ENCODE measurements at regions of chr5 and their contacts with region 1.

Region 1: DNA sequence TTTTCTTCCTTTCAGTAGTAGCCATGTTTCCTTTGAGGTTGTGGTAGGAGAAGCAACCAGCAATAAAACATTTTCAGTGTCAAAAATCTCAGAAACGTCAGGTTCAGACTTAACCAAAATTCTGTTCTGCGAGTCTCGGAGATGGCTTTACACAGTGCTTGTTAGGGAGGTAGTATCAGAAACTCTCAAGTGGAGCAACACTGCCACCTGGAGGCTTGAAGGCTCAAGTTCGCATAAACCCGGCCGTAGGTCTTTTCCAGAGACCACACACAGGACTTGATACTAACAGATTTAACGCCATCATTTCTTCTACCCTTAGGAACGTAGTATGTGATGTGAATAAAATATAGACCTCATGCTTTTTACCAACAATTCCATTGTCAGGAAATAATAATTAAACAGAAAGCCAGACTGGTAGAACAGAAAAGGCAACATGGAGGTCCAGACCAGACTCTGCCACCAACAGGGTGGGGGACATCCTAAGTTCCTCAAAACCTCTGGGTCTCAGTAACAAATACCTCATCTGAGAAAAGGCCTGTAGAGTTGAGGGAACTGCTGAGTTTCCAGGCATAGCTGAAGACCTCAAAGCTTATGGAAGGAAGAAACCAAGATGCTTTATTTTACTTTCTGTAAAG is 8.5 kb downstream of the PTGER4 start:
- DNase-seq: peak; percentile 86
- H3K4me3 ChIP-seq: no peak overlapping the region
- CTCF ChIP-seq: peak; percentile 76

Region 2: DNA sequence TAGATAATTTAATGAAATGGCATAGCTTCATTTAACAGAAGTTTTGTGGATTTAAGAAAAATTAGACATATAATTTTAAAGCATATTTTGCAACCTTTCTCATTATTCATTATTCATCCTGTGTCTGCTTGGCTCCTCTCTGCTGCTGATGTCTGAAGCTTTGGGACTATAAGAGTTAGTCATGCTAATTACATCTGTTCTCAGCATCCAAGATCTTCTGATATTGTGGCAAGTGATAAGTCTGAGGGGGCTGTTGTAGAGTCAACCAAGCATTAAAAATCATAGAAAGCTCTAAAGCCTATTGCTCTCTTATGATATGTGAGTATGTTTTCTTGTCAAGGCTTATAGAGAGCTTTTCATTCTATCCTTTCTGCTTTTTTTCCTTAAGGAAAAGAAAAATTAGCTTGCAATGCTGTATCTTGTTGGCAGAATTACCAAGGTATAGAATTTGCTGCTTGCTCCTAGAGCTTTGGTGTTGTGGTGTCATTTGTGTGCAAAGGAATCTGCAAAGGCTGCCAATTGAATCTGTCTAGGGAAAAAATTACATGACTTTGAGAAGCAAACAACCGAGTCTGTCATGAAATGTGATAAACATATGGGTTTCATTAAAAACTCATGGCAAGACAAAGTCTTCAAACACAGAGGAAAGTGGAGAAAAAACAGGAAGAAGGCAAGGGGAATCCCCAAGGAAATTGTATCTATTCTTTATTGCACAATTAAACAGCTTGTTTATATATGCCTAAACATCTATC is 1107.4 kb before region 1 on chr5:
- in situ Hi-C with region 1: loop called (anchors 10 kb)
- DNase-seq: peak; percentile 43
- H3K4me3 ChIP-seq: no peak overlapping the region
- CTCF ChIP-seq: no peak

Region 3: DNA sequence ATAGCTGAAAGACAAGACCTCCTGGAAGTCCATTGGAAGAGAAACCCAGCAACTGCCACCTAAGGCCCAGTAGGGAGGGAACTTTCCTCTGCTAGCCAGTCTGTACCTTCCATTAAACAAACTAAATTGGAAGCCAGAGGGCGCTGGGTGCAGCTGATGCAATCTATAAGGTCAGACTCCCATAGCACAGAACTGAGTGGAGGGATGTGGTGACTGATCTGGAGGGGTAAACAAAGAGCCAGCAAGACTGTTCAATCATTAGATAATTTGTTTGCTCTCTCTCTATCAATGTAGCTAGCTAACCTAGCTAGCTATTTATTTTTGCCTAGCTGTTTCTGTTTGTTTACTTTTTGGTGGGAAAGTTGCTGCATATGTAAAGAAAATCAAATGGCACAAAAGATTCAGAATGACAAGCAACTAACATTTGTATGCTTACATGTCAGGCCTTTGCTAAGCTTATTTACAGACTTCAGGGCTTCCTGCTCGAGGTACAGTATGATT is 971.7 kb before region 1 on chr5:
- in situ Hi-C with region 1: loop called (anchors 5 kb)
- DNase-seq: peak; percentile 38
- H3K4me3 ChIP-seq: no peak overlapping the region
- CTCF ChIP-seq: peak; percentile 56

Region 4: DNA sequence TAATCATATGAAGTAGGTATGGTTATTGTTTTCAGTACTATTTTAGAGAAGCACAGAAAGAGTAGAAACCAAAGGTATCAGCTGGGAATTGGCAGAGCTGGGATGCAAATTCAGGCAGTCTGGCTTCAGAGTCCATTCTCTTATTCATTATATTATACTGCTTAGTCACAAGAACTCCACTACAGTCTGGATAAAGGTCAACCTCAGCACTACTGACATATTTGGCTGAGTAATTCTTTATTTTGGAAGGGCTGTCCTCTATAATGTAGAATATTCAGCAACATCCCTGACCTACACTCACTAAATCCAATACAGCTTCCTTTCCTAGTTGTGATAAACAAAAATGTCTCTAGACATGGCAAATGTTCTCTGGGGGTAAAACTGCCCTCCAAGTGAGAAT is 29.0 kb after region 1 on chr5:
- in situ Hi-C with region 1: no loop called
- DNase-seq: peak; percentile 49
- H3K4me3 ChIP-seq: no peak overlapping the region
- CTCF ChIP-seq: no peak